ENCODE measurements at regions of chr22 and their contacts with region 1.

Region 1: DNA sequence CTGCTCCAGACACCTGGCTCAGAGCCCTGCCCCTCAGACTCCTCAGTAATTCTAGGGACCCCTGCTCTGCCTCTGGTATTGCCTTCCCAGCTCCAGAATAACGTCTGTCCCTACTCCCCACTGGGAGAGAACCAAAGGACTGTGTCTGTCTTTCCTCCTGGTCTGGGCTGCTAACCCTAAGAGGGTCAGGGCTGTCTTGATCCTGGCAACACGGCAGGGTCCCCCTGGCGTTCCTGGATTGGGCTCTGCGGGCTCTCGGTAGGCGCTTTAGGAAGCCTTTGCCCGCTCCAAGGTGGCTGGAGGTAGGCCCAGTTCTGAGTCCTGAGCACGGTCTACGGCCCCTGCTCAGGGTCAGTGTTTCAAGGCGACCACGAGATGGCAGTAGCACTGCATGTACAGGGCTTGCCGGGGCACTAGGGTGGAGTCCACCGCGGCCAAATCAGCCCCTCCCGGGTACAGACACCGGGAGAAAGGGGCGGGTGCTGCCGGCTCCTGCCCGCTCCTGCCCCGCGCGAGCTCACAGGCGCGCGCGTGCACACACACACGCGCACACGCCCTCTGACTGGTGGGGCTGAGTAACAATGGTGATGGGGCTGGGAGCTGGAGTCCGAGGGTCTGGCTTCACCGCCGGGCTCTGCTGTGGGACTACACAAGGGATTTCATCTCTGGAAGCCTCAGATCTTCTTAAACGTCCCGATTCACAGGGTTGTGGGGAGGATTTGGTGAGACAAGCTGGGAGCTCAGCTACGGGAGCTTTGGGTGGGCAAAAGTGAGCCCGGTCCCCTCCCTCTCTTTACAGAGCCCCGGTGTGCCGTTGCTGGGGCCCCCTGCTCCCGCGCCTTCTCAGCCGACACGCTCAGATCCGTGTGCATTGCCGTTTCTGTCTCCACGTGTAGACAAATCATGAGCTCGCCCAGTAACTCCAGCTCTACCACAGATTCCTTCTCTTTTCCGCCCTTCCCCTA is 30.1 kb upstream of the HMOX1 start:
- DNase-seq: peak; percentile 94
- ATAC-seq: peak; percentile 92
- H3K4me3 Mint-ChIP-seq: peak overlapping the region; percentile 76
- H3K27ac Mint-ChIP-seq: no peak overlapping the region
- H3K4me1 Mint-ChIP-seq: peaks cover 18% of the 10 kb centered on the region
- H3K27me3 Mint-ChIP-seq: peaks cover 10% of the 10 kb centered on the region; the same call in 1 of the 2 replicates
- CTCF ChIP-seq: peak; percentile 78

Region 2: GRCh38 chr22:35367301-35367886 is 16.6 kb after region 1 on chr22:
- CTCF ChIA-PET with region 1: interaction called, 10 read pairs
- POLR2A ChIA-PET with region 1: interaction called, 3 read pairs
- DNase-seq: no peak
- ATAC-seq: no peak
- H3K4me3 Mint-ChIP-seq: no peak overlapping the region
- H3K27ac Mint-ChIP-seq: no peak overlapping the region; the same call in 1 of the 2 replicates
- H3K4me1 Mint-ChIP-seq: peaks cover 27% of the 10 kb centered on the region
- H3K27me3 Mint-ChIP-seq: peaks cover 4% of the 10 kb centered on the region; the same call in 1 of the 2 replicates
- CTCF ChIP-seq: no peak

Region 3: DNA sequence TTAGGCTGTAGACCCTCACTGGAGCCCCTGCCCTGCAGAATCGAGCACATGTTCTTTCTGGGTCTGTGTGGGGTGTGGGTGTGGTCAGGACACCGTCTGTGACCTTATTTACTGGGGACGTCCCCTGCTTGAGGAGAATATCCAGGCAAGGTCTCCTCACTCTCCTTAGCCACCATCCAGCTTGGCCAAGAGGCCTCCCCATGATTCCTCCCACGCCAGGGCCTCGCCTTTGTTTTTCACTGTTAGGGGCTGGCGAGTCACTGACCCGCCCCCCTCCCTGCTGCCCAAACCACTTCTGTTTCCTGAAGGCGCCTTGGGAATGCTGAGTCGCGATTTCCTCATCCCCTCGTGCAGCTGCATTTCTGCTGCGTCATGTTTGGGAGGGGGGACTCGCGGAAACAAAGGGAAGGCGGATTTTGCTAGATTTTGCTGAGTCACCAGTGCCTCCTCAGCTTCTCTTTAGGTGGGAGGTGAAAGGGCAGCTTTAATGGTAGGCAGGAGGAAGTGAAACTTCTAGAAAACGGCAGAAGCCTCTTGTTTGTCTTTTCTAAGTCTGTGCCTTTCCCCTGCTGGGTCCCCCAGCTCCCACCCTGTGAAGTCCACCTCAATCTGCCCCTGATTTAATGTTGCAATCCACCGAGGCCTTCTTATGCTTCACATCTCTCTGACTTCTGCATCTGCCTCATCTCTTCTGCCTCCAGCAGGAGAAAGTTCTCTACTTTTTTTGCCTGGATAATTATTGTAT is 26.1 kb after region 1 on chr22:
- CTCF ChIA-PET with region 1: interaction called, 13 read pairs
- POLR2A ChIA-PET with region 1: no interaction called
- DNase-seq: peak; percentile 94
- ATAC-seq: peak; percentile 46
- H3K4me3 Mint-ChIP-seq: peak overlapping the region; percentile 18; the same call in 1 of the 2 replicates
- H3K27ac Mint-ChIP-seq: peak overlapping the region; percentile 90
- H3K4me1 Mint-ChIP-seq: peaks cover 70% of the 10 kb centered on the region
- H3K27me3 Mint-ChIP-seq: peaks cover 2% of the 10 kb centered on the region; the same call in 1 of the 2 replicates
- CTCF ChIP-seq: no peak

Region 4: DNA sequence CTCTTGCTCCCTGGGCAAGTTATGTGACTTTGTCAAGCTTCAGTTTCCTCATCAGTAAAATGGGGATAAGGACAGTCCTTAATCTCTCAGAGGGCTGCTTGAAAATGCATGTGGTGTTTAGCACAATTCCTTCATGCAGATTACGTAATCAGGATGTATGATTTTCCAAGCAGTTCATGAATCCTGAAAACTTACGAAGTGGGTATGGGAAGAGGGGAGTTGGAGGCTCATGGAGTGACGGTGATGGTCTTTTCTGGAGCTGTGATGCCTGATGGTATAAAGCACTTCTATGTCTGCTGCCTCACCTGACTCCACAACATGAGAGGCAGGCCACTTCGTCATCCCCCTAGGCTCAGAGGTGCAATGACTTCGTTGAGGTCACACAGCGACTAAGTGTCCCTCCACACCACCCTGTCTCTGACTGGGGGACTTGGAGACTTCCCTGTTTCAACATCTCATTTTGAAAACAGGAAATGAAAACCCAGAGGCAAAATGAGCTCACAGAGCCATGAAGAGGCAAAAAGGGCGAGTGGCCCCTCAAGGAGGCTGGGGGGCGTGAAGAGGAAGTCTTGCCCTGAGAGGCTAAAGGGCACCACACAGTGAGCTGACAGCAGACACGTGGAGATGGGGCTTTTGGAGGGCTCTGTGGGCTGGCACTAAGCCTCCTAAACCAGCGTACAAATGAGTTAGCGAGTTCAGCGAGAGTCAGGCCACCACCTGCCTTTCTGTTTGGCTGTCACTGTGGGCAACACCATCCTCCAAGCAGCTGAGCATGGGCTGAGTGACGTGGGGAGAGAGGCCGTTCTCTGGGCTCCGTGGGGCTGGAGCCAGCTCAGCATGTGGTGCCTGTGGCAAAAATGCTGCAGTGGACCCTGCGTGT is 59.2 kb after region 1 on chr22:
- CTCF ChIA-PET with region 1: interaction called, 13 read pairs
- POLR2A ChIA-PET with region 1: no interaction called
- DNase-seq: no peak
- ATAC-seq: no peak
- H3K4me3 Mint-ChIP-seq: no peak overlapping the region
- H3K27ac Mint-ChIP-seq: 0 out of 2 replicates have a peak overlapping the region, but pooled peaks have one; percentile 15
- H3K4me1 Mint-ChIP-seq: no peaks in the 10 kb centered on the region
- H3K27me3 Mint-ChIP-seq: no peaks in the 10 kb centered on the region
- CTCF ChIP-seq: no peak

Region 5: GRCh38 chr22:35582861-35583670 is 232.2 kb after region 1 on chr22:
- CTCF ChIA-PET with region 1: interaction called, 10 read pairs
- POLR2A ChIA-PET with region 1: no interaction called
- DNase-seq: peak; percentile 65
- ATAC-seq: peak; percentile 86
- H3K4me3 Mint-ChIP-seq: no peak overlapping the region
- H3K27ac Mint-ChIP-seq: no peak overlapping the region
- H3K4me1 Mint-ChIP-seq: no peaks in the 10 kb centered on the region
- H3K27me3 Mint-ChIP-seq: no peaks in the 10 kb centered on the region
- CTCF ChIP-seq: peak; percentile 94